H1 (cell line): ENCODE measurements at regions of chr3 and their contacts with region 1.

Region 1: DNA sequence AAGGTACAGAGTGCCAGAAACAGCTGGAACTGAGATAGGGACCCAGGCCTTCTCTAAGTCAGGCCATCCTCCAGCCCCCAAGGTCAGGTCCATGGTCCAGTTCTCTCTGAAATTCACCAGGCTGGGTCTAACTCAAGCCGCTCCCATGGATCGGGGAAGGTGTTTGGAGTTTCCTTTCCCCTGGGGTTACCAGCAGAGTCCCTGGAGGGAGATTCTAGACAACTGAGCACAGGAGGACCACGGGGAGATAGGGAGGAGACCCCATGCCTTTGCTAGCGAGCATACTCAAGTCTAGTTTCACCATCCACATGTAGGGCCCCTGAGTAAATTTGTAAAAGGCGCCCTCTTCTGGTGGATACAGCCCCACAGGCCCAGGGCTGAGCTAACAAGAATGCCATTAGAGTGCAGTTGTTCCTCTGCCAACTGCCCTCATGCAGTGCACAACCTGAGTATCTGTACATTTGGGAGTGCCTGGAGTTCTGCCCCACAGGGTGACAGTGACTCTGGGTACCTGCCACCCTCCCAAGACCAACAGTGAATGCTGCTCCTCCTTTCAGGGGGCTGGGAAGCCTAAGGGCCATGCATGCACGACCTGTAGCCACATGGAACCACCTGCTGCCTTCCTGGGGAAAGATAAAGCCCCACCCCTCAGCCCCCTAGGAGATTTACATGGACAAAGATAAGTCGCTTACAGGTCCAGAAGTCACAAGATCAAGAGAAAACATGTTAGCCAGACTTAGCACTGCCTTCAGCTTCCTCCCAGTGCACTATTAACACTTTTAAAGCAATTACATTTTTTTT is 89.0 kb downstream of the IQSEC1 start:
- DNase-seq: peak; percentile 43 to 84
- H3K4me3 ChIP-seq: no peak overlapping the region
- H3K27ac ChIP-seq: no peak overlapping the region
- H3K4me1 ChIP-seq: peaks cover 0 to 18% (median 13%) of the 10 kb centered on the region in 4 experiments; a peak in 6 of 7 replicates
- H3K27me3 ChIP-seq: no peaks in the 10 kb centered on the region
- CTCF ChIP-seq: peak; percentile 56 to 90 (median 79)
- EP300 ChIP-seq: no peak
- POLR2A ChIP-seq: no peak
- RAD21 ChIP-seq: peak; percentile 70 to 84

Region 2: DNA sequence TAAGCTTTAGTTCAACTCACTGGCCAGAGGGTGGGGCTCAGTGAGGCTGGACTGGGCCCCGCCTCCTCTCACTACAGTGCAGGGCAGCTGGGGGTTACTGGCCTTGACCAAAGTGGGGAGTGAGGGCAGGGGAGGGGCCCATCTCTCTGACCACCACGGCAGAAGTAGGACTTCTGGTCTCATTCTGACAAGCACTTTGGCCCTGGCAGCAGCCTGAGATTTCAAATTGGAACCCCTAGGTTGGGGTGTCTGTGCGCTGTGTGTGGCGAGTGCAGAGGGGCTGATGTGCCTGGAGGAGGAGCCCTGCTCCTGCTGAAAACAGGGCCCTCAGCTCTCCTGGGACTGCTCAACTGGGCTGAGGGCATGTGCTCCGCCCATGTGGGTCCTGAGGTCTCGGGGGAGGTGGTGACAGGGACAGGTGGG is 82.6 kb before region 1 on chr3:
- CTCF ChIA-PET with region 1: interaction called, 45 read pairs
- POLR2A ChIA-PET with region 1: no interaction called
- DNase-seq: no peak
- H3K4me3 ChIP-seq: no peak overlapping the region
- H3K27ac ChIP-seq: no peak overlapping the region
- H3K4me1 ChIP-seq: no peaks in the 10 kb centered on the region; a peak in 1 of 7 replicates
- H3K27me3 ChIP-seq: no peaks in the 10 kb centered on the region
- CTCF ChIP-seq: peak in 2 of 3 experiments; percentile 43 to 56; a peak in 3 of 4 replicates
- EP300 ChIP-seq: no peak
- POLR2A ChIP-seq: no peak
- RAD21 ChIP-seq: peak; percentile 65 to 72

Region 3: DNA sequence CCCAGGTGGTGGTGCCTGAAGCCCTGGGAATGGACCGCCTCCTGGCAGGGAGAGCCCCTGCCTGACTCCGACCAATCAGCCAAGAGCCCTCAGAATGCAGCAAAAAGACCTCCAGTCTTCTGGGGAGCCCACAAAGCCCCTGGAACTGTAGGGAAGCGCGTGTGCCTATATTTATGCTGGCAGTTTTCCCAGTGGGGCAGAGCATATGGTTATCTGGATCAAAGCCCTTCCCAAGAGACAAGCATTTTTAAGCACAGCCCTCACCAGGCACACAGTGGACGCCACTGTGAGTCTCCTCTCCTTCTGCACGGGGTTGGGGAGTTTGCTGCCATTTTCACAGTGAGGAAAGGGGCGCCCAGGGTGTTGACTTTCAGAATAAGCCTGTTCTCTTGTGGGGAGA is 61.9 kb before region 1 on chr3:
- CTCF ChIA-PET with region 1: interaction called, 28 read pairs
- POLR2A ChIA-PET with region 1: no interaction called
- DNase-seq: no peak
- H3K4me3 ChIP-seq: no peak overlapping the region
- H3K27ac ChIP-seq: no peak overlapping the region
- H3K4me1 ChIP-seq: no peaks in the 10 kb centered on the region
- H3K27me3 ChIP-seq: no peaks in the 10 kb centered on the region
- CTCF ChIP-seq: no peak
- EP300 ChIP-seq: no peak
- POLR2A ChIP-seq: no peak
- RAD21 ChIP-seq: no peak

Region 4: GRCh38 chr3:12938258-12938711 is 45.9 kb before region 1 on chr3:
- CTCF ChIA-PET with region 1: interaction called, 21 read pairs
- POLR2A ChIA-PET with region 1: no interaction called
- DNase-seq: no peak
- H3K4me3 ChIP-seq: no peak overlapping the region
- H3K27ac ChIP-seq: no peak overlapping the region
- H3K4me1 ChIP-seq: no peaks in the 10 kb centered on the region
- H3K27me3 ChIP-seq: no peaks in the 10 kb centered on the region
- CTCF ChIP-seq: no peak
- EP300 ChIP-seq: no peak
- POLR2A ChIP-seq: no peak
- RAD21 ChIP-seq: no peak

Region 5: DNA sequence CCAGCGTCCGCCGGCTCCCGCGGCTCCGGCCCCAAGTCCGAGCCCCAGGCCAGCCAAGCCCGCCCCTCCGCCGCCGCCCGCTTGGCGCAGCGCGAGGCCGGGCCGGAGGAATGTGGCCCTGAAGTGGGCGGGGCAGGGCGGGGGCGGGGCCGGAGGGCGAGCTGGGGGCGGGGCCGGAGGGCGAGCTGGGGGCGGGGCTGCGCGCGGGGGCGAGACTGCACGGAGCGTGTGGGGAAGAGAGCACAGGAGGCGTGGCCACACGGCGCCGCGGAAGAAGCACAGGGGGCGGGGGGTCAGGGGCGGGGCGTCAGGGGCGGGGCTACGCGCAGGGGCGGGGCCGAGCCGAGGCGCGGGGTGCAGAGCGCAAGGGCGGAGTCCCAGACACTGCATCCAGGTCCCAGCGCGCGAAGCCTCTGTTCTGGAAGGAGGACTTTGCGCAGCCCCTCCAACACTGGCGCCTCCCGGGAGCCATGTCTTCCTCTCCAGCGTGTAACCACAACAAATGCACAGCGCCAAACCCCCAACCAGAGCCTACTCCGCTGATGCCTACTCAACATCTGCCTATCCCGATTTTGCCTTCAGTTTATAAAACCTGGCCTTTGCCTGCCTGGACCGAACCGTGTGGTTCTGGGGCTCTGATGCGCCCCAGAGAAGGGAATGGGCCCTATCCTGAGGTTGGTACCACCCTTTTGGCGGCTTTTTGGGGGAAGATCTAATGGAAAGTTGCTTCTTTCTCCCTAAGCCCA is 16.4 kb before region 1 on chr3:
- CTCF ChIA-PET with region 1: interaction called, 267 read pairs
- POLR2A ChIA-PET with region 1: interaction called, 6 read pairs
- DNase-seq: peak; percentile 60 to 87
- H3K4me3 ChIP-seq: peak overlapping the region; percentile 52 to 87 (median 63)
- H3K27ac ChIP-seq: no peak overlapping the region; the same call in 1 of the 2 replicates
- H3K4me1 ChIP-seq: peaks cover 2 to 24% (median 7%) of the 10 kb centered on the region in 4 experiments; a peak in 6 of 7 replicates
- H3K27me3 ChIP-seq: peaks cover 0 to 12% (median 2%) of the 10 kb centered on the region in 4 experiments; a peak in 5 of 7 replicates
- CTCF ChIP-seq: no peak
- EP300 ChIP-seq: no peak
- POLR2A ChIP-seq: peak in 1 of 2 experiments; percentile 78; a peak in 2 of 3 replicates
- RAD21 ChIP-seq: no peak

Region 6: DNA sequence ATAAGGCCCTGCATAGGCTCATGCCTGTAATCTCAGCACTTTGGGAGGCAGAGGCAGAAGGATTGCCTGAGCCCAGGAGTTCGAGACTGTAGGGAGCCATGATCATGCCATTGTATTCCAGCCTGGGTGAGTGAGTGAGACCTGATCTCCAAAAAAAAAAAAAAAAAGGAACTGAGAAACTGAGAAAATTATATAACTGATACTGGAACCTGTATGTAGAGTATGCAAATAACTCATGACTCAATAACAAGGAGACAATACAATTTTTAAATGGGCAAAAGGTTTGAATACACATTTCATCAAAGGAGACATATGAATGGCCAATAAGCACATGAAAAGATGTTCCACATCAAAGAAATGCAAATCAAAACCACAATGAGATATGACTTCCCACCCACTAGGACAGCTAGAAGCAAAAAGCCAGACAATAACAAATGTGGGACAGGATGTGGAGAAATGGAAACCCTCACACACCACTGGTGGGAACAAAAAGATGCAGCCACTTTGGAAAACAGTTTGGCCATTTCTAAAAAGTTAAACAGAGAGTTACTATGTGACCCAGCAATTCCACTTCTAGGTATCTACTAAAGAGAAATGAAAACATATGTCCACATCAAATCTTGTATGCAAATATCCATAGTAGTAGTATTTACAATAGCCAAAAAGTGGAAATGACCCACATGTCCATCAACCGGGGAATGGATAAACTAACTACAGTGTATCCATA is 18.3 kb after region 1 on chr3:
- CTCF ChIA-PET with region 1: interaction called, 18 read pairs
- POLR2A ChIA-PET with region 1: no interaction called
- DNase-seq: no peak
- H3K4me3 ChIP-seq: no peak overlapping the region
- H3K27ac ChIP-seq: no peak overlapping the region
- H3K4me1 ChIP-seq: peaks cover 0 to 2% (median 0%) of the 10 kb centered on the region in 4 experiments; a peak in 2 of 7 replicates
- H3K27me3 ChIP-seq: 0 out of 7 replicates have a peak, but pooled peaks cover 0 to 3% (median 0%) of the 10 kb centered on the region in 4 experiments
- CTCF ChIP-seq: no peak
- EP300 ChIP-seq: no peak
- POLR2A ChIP-seq: no peak
- RAD21 ChIP-seq: no peak

Region 7: DNA sequence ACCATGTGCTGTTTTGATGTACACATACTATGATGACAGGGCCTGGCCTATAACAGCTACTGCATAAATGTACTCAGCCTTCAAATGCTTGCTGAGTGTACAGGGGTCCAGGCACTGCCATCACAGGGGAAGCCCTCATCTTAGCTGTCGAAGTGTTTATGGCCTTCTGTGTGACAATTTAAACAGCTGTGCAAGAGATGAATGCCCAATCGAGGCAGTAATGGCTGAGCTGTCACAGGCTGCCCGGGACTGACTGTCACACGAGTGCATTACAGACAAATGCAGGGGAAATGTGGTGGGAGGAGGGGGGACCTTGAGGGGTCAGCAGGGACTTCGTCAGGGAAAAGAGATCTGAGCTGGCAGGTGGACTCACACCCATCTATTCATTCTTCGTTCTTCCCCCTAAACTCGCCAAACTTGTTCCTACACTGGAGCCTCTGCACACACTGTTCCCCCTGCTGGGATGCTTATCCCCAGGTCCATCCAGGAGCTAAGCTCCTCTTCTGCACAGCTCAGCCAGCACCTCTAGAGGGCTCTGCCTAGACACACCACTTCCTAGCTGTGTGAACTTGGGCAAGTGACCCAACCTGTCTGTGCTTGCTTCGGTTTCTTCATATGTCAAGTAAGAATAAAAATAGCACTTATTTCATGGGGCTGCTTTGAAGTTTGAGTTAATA is 245.2 kb after region 1 on chr3:
- CTCF ChIA-PET with region 1: no interaction called
- POLR2A ChIA-PET with region 1: no interaction called
- DNase-seq: peak in 1 of 2 experiments; percentile 59
- H3K4me3 ChIP-seq: no peak overlapping the region
- H3K27ac ChIP-seq: no peak overlapping the region
- H3K4me1 ChIP-seq: peaks cover 0 to 3% (median under 1%) of the 10 kb centered on the region in 4 experiments; a peak in 2 of 7 replicates
- H3K27me3 ChIP-seq: no peaks in the 10 kb centered on the region
- CTCF ChIP-seq: peak in 2 of 3 experiments; percentile 78 to 92; a peak in 3 of 4 replicates
- EP300 ChIP-seq: peak in 1 of 2 experiments; percentile 33; a peak in 1 of 3 replicates
- POLR2A ChIP-seq: no peak
- RAD21 ChIP-seq: peak; percentile 65 to 81